Esophagus muscularis mucosa (tissue), 4 donors: ENCODE measurements at regions of chr19 and their contacts with region 1.

Region 1: GRCh38 chr19:4123615-4124568 is at the start of gene MAP2K2:
- DNase-seq: peak; percentile 98
- H3K4me3 ChIP-seq: peak within 1 kb of the TSS; percentile 84 to 97 (median 86)
- H3K27ac ChIP-seq: peak within 1 kb of the TSS; percentile 77 to 80 (median 79)
- H3K4me1 ChIP-seq: peaks cover 20 to 47% (median 40%) of the 10 kb centered on the region in 4 donors
- H3K27me3 ChIP-seq: no peaks in the 10 kb centered on the region
- CTCF ChIP-seq: peak in 2 of 3 experiments; percentile 14 to 20
- EP300 ChIP-seq: no peak
- POLR2A ChIP-seq: no peak
- total RNA-seq, gene MAP2K2: 59.0 to 145 (median 101) TPM

Region 2: GRCh38 chr19:4065430-4066175 is 58.3 kb before region 1 on chr19:
- intact Hi-C with region 1: loop called (anchors 5 kb)
- DNase-seq: peak; percentile 99
- H3K4me3 ChIP-seq: peak overlapping the region; percentile 90 to 100 (median 100)
- H3K27ac ChIP-seq: peak overlapping the region; percentile 98 to 99 (median 99)
- H3K4me1 ChIP-seq: peaks cover 34 to 57% (median 55%) of the 10 kb centered on the region in 4 donors
- H3K27me3 ChIP-seq: no peaks in the 10 kb centered on the region
- CTCF ChIP-seq: no peak
- EP300 ChIP-seq: no peak
- POLR2A ChIP-seq: no peak

Region 3: DNA sequence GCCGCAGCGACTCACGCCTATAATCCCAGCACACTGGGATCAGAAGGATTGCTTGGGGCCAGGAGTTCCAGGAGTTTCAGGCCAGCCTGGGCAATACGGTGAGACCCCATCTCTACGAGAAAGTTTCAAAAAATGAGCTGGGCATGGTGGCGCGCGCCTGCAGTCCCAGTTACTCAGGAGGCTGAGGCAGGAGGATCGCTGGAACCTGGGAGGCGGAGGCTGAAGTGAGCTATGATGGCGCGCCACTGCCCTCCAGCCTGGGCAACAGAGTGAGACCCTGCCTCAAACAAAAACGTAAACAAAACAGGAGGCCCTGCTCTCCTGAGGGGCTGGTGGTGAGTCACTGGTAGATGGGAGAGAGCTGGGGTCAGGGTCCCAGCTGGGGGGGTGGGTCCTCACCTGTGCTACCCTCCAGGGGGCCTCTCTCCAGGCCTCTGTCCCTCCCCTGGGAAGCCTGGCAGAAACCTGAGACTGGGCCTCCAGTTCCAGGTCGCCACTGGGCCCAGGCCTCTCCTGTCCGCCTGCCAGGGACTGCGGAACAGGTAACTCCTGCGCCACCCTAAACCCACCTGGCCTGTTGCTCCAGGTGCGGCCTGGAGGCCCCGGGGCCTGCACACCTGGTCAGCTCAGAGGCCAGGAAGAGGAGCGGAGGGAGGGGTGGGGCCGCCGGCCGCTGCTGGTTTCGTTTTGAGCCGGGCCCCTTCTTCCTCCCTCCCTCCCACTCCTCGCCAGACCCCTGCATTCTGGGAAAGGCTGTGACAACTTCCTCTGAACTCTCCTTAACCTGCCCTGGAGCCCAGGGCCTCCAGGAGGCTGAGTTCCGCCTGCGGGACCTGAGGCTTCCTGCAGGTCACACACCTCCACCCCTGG is 40.0 kb before region 1 on chr19:
- intact Hi-C with region 1: loop called (anchors 5 kb)
- DNase-seq: no peak
- H3K4me3 ChIP-seq: peak overlapping the region; percentile 29 to 44 (median 34)
- H3K27ac ChIP-seq: peak overlapping the region; percentile 34 to 52 (median 38)
- H3K4me1 ChIP-seq: peaks cover 8 to 18% (median 16%) of the 10 kb centered on the region in 4 donors
- H3K27me3 ChIP-seq: no peaks in the 10 kb centered on the region
- CTCF ChIP-seq: no peak
- EP300 ChIP-seq: no peak
- POLR2A ChIP-seq: no peak

Region 4: GRCh38 chr19:4217429-4218264 is 93.8 kb after region 1 on chr19:
- intact Hi-C with region 1: no loop called
- DNase-seq: no peak
- H3K4me3 ChIP-seq: no peak overlapping the region
- H3K27ac ChIP-seq: no peak overlapping the region
- H3K4me1 ChIP-seq: no peaks in the 10 kb centered on the region
- H3K27me3 ChIP-seq: peaks cover 0 to 1% (median 0%) of the 10 kb centered on the region in 4 donors
- CTCF ChIP-seq: no peak
- EP300 ChIP-seq: no peak
- POLR2A ChIP-seq: no peak